SK-N-SH (cell line): ENCODE measurements at regions of chr17 and their contacts with region 1.

Region 1: DNA sequence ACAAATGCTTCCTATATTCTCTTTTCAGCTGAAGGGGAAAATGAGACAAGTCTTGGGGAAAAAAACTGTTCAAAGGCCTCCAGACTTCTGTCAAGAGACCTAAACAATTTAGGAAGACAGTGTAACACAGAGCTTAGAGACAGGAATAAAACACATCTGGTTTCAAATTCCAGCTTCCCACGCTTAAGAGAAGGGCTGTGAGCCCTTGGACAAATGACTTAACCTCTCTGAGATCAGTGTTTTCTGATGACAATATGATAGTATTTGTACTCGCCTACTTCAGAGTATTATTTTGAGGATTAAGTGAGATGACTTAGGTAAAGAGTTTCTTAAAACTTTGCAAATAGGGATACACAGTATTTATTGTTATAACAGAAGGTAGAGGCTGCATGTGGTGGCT is 29.5 kb downstream of the SMURF2 start:
- DNase-seq: no peak
- H3K4me3 ChIP-seq: no peak overlapping the region
- H3K27ac ChIP-seq: peak overlapping the region in 1 of 2 experiments; percentile 95; a peak in 1 of 4 replicates
- H3K4me1 ChIP-seq: peaks cover 0 to 4% of the 10 kb centered on the region in 2 experiments; a peak in 1 of 4 replicates
- H3K27me3 ChIP-seq: no peaks in the 10 kb centered on the region
- CTCF ChIP-seq: no peak
- EP300 ChIP-seq: no peak
- RAD21 ChIP-seq: no peak

Region 2: GRCh38 chr17:64648234-64648633 is 15.6 kb after region 1 on chr17:
- CTCF ChIA-PET with region 1: interaction called, 12 read pairs
- POLR2A ChIA-PET with region 1: no interaction called
- DNase-seq: no peak
- H3K4me3 ChIP-seq: no peak overlapping the region
- H3K27ac ChIP-seq: peak overlapping the region in 1 of 2 experiments; percentile 37; a peak in 1 of 4 replicates
- H3K4me1 ChIP-seq: peaks cover 3 to 14% of the 10 kb centered on the region in 2 experiments; a peak in 3 of 4 replicates
- H3K27me3 ChIP-seq: no peaks in the 10 kb centered on the region
- CTCF ChIP-seq: no peak
- EP300 ChIP-seq: no peak
- RAD21 ChIP-seq: no peak